Heart right ventricle (tissue), 16 donors: ENCODE measurements at regions of chr9 and their contacts with region 1.

Region 1: DNA sequence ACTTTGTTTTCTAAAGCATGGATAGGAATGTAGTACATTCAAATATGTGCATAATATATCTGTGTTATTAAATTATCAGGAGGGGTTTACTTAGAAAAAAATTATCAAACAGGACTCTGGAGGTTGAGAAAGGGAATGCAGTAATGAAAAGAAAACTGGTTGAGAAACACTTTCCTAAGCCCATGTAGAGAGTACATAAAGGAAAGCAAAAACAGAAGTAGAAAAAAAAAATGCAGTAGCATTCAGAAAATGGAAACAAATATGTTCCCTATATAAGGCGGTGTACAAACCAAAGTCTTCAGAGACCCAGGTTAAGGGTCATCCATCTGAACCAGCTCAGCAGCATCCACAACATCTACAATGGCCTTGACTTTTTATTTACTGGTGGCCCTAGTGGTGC is at the start of gene IFNA8:
- DNase-seq: no peak
- ATAC-seq: no peak
- H3K4me3 ChIP-seq: no peak within 1 kb of the TSS
- H3K27ac ChIP-seq: no peak within 1 kb of the TSS
- H3K4me1 ChIP-seq: no peaks in the 10 kb centered on the region
- H3K27me3 ChIP-seq: peaks cover 0 to 46% (median 18%) of the 10 kb centered on the region in 7 donors
- CTCF ChIP-seq: no peak
- total RNA-seq, gene IFNA8: not detected

Region 2: DNA sequence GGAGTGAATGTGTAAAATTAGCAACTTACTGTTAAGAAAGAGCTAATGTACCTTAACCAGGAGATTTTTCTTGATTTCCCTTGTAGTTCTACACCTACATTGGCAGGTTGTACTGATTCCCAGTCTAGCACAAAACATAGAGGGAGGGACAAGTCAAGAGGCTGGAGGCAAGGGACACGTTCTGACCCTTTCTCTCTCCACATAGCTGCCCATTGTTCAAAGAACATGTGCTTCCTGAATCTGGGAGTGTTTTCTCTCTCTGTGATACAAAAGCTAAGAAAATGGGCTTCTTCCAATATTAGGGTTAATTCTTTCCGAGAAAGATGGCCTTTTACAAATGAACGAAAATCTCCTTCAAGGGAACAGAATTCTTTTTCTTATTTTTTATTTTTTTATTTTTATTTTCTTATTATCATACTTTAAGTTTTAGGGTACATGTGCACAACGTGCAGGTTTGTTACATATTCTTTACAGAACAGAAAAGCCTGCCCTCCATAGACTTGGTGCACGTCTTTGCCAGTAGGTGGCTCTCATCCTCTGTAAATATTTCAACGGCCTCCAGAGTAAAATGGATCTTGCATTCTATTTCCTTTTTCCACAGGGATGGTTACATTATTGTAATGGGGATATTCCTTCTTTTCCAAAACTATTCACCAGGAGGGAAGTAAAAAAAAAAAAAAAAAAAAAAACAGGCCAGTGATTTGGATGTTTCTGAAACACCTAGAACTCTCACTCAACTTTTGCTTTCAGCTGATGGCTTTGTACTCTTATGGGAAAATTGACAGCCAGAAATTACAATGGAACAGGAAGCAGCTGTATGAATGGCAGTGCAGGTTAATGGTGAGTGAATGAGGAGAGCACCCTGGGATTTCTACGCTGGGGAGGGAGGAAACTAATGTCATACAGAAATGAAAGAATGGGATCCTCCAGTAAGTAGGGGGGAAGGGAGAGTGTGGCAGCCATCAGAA is 90.6 kb before region 1 on chr9:
- intact Hi-C with region 1: no loop called
- DNase-seq: peak in 1 of 2 donors; percentile 34
- ATAC-seq: peak in 7 of 8 donors; percentile 46 to 80 (median 64)
- H3K4me3 ChIP-seq: no peak overlapping the region
- H3K27ac ChIP-seq: no peak overlapping the region
- H3K4me1 ChIP-seq: peaks cover 0 to 21% (median 0%) of the 10 kb centered on the region in 9 donors
- H3K27me3 ChIP-seq: no peaks in the 10 kb centered on the region
- CTCF ChIP-seq: peak; percentile 32 to 79 (median 69)

Region 3: GRCh38 chr9:21428235-21428634 is 19.4 kb after region 1 on chr9:
- intact Hi-C with region 1: loop called in 1 of 10 experiments (anchors 1 kb)
- DNase-seq: no peak
- ATAC-seq: no peak
- H3K4me3 ChIP-seq: no peak overlapping the region
- H3K27ac ChIP-seq: no peak overlapping the region
- H3K4me1 ChIP-seq: no peaks in the 10 kb centered on the region
- H3K27me3 ChIP-seq: peaks cover 0 to 44% (median 18%) of the 10 kb centered on the region in 7 donors
- CTCF ChIP-seq: no peak

Region 4: GRCh38 chr9:21852754-21853153 is 443.9 kb after region 1 on chr9:
- intact Hi-C with region 1: no loop called
- DNase-seq: no peak
- ATAC-seq: no peak
- H3K4me3 ChIP-seq: no peak overlapping the region
- H3K27ac ChIP-seq: no peak overlapping the region
- H3K4me1 ChIP-seq: peaks cover 0 to 12% (median 0%) of the 10 kb centered on the region in 9 donors
- H3K27me3 ChIP-seq: no peaks in the 10 kb centered on the region
- CTCF ChIP-seq: no peak